ENCODE measurements at regions of chr14 and their contacts with region 1.

Region 1: GRCh38 chr14:63986789-63987533 is 134.2 kb downstream of the SYNE2 start:
- DNase-seq: no peak
- H3K4me3 ChIP-seq: no peak overlapping the region
- H3K27ac ChIP-seq: no peak overlapping the region
- H3K4me1 ChIP-seq: no peaks in the 10 kb centered on the region
- H3K27me3 ChIP-seq: no peaks in the 10 kb centered on the region
- CTCF ChIP-seq: no peak
- EP300 ChIP-seq: no peak
- POLR2A ChIP-seq: no peak

Region 2: GRCh38 chr14:63800651-63801375 is 186.1 kb before region 1 on chr14:
- intact Hi-C with region 1: loop called (anchors 10 kb)
- DNase-seq: no peak
- H3K4me3 ChIP-seq: no peak overlapping the region
- H3K27ac ChIP-seq: no peak overlapping the region
- H3K4me1 ChIP-seq: peaks cover 0 to 11% (median 10%) of the 10 kb centered on the region in 4 donors
- H3K27me3 ChIP-seq: no peaks in the 10 kb centered on the region
- CTCF ChIP-seq: no peak
- EP300 ChIP-seq: no peak
- POLR2A ChIP-seq: no peak

Region 3: GRCh38 chr14:64026600-64026999 is 39.6 kb after region 1 on chr14:
- intact Hi-C with region 1: no loop called
- DNase-seq: no peak
- H3K4me3 ChIP-seq: no peak overlapping the region
- H3K27ac ChIP-seq: no peak overlapping the region
- H3K4me1 ChIP-seq: peaks cover 0 to 31% (median 15%) of the 10 kb centered on the region in 4 donors
- H3K27me3 ChIP-seq: no peaks in the 10 kb centered on the region
- CTCF ChIP-seq: no peak
- EP300 ChIP-seq: no peak
- POLR2A ChIP-seq: no peak